Activated naive CD4-positive, alpha-beta T cell treated with anti-CD3 and anti-CD28 coated beads for 36 hours (primary cell): ENCODE measurements at regions of chr13 and their contacts with region 1.

Region 1: GRCh38 chr13:26186118-26186870 is 35.8 kb downstream of the RNF6 start:
- DNase-seq: peak; percentile 88
- H3K4me3 Mint-ChIP-seq: peak overlapping the region; percentile 88
- H3K27ac Mint-ChIP-seq: peak overlapping the region; percentile 95
- H3K4me1 Mint-ChIP-seq: peaks cover 21% of the 10 kb centered on the region
- H3K27me3 Mint-ChIP-seq: no peaks in the 10 kb centered on the region

Region 2: GRCh38 chr13:24557081-24557480 is 1629.2 kb before region 1 on chr13:
- CTCF ChIA-PET with region 1: no interaction called
- intact Hi-C with region 1: no loop called
- DNase-seq: no peak
- H3K4me3 Mint-ChIP-seq: no peak overlapping the region
- H3K27ac Mint-ChIP-seq: no peak overlapping the region
- H3K4me1 Mint-ChIP-seq: peaks cover 8% of the 10 kb centered on the region
- H3K27me3 Mint-ChIP-seq: peaks cover 43% of the 10 kb centered on the region

Region 3: DNA sequence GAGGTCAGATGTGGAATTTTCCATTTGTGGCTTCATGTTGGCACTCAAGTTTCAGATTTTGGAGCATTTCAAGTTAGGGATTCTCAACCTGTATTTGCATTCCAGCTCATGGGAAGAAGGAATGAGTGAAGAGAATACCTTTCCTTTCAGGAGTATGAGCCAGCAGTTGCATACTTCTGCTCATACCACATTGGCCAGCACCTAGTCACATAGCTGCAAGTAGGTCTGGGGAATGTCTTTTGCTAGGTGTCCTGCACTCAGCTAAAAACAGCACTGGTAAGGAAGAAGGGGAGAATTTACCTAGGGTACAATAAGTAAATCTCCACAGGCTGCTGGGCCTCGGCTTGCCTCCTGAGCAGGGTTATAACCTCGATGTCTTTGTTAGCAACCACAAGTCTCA is 839.1 kb before region 1 on chr13:
- CTCF ChIA-PET with region 1: no interaction called
- intact Hi-C with region 1: no loop called
- DNase-seq: no peak
- H3K4me3 Mint-ChIP-seq: no peak overlapping the region
- H3K27ac Mint-ChIP-seq: no peak overlapping the region
- H3K4me1 Mint-ChIP-seq: no peaks in the 10 kb centered on the region
- H3K27me3 Mint-ChIP-seq: no peaks in the 10 kb centered on the region

Region 4: DNA sequence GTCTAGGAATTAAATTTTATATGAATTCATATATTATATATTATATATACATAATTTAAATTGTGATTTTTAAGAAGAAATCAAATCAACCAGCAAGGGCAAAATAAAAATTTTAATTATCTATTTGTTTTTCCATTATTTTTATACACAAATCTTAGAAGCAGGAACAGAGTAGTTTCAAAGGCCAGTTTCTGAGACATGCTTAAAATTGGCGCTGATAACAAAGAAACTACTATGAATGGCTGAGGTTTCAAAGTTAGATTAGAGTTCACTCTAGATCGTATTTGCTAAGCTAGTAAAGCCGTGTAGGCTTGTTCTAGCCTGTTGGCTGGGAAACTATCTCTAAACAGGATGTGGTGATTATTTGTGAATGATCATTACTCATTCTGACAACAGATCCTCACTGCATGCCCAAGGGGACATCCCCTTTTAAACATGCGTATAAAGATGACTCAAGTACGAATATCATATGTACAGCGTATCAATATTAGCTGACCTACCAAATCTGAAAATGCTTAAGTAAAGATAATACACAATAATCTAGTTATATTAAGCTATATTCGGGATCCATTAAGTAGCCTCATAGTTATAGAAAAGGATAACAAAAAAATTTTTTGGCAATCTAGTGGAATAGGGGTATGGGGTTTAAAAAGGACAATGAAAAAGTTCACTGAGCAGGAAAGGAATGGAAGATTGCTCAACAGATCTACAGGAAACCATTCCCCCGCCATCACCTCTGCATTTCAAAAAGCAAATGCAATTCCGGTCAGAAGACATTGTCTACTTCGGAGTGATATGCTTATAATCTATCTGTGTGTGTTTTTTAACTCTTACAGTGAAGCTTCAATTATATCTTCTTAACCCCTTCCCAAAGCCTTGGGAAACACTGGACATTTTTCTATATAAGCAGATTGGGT is 284.6 kb before region 1 on chr13:
- CTCF ChIA-PET with region 1: no interaction called
- intact Hi-C with region 1: loop called (anchors 10 kb)
- DNase-seq: peak; percentile 57
- H3K4me3 Mint-ChIP-seq: no peak overlapping the region
- H3K27ac Mint-ChIP-seq: no peak overlapping the region
- H3K4me1 Mint-ChIP-seq: peaks cover 25% of the 10 kb centered on the region
- H3K27me3 Mint-ChIP-seq: no peaks in the 10 kb centered on the region

Region 5: DNA sequence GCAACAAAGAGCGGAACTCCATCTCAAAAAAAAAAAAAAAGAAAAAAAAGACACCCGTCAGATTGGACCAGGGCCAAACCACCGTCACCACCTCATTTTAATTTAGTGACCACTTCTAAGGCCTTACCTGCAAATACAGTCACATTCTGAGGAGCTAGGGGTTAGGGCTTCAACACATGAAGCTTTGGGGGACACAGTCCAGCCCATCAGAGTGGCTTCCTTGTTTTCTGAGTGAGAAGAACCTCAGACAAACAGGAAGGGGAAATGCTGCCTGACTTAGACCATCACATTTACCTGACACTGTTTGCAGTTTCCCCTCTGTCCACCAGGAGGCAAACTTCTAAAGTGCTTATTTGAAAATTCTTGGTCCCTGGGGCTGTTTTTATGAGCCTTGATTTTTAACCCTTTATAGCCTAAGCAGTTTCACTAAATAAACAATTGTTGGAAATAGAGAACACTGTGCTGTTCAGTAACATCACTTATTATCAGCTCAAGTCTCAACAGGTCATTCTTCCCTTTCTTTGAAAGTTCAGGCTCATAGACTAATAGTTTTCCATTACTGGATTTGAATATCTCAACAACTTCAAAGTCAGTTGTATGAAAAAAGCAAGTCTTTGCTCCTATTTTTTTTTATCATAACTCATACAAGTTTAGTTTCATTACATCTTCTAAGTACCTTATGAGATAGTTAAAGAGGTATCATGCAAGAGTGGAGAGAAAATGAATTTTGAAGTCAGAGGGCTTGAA is 296.3 kb after region 1 on chr13:
- CTCF ChIA-PET with region 1: interaction called, 8 read pairs
- intact Hi-C with region 1: loop called (anchors 1 kb)
- DNase-seq: peak; percentile 82
- H3K4me3 Mint-ChIP-seq: no peak overlapping the region
- H3K27ac Mint-ChIP-seq: no peak overlapping the region
- H3K4me1 Mint-ChIP-seq: peaks cover 16% of the 10 kb centered on the region
- H3K27me3 Mint-ChIP-seq: no peaks in the 10 kb centered on the region

Region 6: DNA sequence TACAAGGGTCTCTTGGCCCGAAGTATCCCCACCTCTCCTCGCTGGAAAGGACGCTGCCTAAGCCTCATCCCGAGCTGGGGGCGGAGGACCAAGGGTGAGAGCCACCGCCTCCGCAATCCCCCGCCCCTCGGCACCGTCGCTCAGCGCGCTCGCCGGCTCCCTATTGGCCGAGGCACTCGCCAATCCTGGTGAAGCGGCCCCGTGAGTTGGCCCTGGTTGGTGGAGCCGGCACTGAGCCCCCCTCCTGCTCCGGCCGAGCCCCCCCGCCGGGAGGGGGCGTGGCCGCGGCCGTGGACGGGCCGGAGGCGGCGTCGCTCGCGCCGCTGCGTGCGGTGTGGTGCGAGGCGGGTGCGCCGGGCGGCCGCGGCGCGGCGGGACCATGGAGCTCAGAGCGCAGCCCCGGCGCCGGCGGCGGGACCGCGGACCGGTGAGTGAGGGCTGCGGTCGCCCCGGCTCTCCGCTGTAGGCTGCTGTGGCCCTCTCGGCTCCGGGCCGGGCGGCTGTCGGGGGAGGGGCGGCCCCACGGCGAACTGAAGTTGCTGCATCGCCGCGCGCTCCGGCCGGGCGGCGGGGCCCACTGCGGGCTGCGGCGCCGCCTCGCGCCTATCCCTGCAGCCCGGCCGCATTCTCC is 371.2 kb after region 1 on chr13 and contains the start of gene WASF3:
- CTCF ChIA-PET with region 1: no interaction called
- intact Hi-C with region 1: loop called (anchors 2 kb)
- DNase-seq: peak; percentile 56
- H3K4me3 Mint-ChIP-seq: peak within 1 kb of the TSS; percentile 43
- H3K27ac Mint-ChIP-seq: no peak within 1 kb of the TSS
- H3K4me1 Mint-ChIP-seq: peaks cover 8% of the 10 kb centered on the region
- H3K27me3 Mint-ChIP-seq: peaks cover 36% of the 10 kb centered on the region
- total RNA-seq, gene WASF3: not detected

Region 7: DNA sequence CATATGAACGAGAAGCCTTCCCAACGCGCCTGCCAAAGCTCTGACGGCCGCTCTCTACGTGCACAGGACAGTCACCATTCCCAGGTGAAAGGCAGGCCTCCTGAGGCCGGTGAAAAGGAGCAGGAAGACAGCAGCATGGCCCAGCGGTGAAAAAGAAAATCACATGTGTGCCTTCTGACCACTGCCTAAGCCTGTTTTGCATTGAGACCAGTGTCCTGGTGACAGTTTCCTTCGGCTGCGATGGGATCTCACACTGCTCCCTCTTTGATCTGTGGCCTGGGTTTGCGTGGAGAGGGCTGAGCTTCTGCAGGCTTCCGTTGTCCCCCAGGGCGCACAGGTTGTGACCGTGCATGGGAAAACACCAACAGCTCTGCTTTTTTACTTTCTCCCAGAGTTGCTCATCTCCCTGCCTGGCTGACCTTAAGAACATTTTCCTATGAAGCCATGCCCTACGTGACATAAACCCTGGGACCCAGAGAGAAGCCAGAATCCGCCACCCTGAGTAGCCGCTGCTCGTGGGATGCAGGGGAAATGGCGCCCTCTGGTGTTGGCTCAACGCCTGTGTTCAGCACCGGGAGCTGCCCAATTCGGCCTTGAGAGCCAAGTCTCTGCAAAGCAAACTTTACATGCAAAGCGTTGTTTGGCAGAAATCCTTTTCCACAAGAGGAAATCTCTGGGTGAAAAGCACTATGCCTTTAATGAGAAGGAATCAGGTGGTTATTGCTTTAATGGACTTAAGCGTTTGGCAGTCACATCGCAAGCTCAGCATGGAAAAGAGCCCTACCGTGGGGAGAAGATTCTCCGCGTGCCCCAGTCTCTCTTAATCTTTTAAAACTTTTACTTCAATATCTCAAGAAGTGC is 686.5 kb after region 1 on chr13:
- CTCF ChIA-PET with region 1: no interaction called
- intact Hi-C with region 1: loop called (anchors 5 kb)
- DNase-seq: peak; percentile 74
- H3K4me3 Mint-ChIP-seq: no peak overlapping the region
- H3K27ac Mint-ChIP-seq: no peak overlapping the region
- H3K4me1 Mint-ChIP-seq: no peaks in the 10 kb centered on the region
- H3K27me3 Mint-ChIP-seq: peaks cover 5% of the 10 kb centered on the region